ENCODE measurements at regions of chr20 and their contacts with region 1.

Region 1: GRCh38 chr20:5205348-5206210 is 78.8 kb downstream of the CDS2 start:
- DNase-seq: peak; percentile 87
- ATAC-seq: peak; percentile 100
- H3K4me3 Mint-ChIP-seq: no peak overlapping the region
- H3K27ac Mint-ChIP-seq: no peak overlapping the region
- H3K4me1 Mint-ChIP-seq: peaks cover 3% of the 10 kb centered on the region; the same call in 1 of the 2 replicates
- H3K27me3 Mint-ChIP-seq: no peaks in the 10 kb centered on the region
- CTCF ChIP-seq: peak; percentile 80

Region 2: GRCh38 chr20:4937397-4938319 is 267.9 kb before region 1 on chr20:
- CTCF ChIA-PET with region 1: no interaction called
- POLR2A ChIA-PET with region 1: no interaction called
- DNase-seq: no peak
- ATAC-seq: peak; percentile 84
- H3K4me3 Mint-ChIP-seq: no peak overlapping the region
- H3K27ac Mint-ChIP-seq: no peak overlapping the region
- H3K4me1 Mint-ChIP-seq: peaks cover 29% of the 10 kb centered on the region
- H3K27me3 Mint-ChIP-seq: no peaks in the 10 kb centered on the region
- CTCF ChIP-seq: no peak

Region 3: DNA sequence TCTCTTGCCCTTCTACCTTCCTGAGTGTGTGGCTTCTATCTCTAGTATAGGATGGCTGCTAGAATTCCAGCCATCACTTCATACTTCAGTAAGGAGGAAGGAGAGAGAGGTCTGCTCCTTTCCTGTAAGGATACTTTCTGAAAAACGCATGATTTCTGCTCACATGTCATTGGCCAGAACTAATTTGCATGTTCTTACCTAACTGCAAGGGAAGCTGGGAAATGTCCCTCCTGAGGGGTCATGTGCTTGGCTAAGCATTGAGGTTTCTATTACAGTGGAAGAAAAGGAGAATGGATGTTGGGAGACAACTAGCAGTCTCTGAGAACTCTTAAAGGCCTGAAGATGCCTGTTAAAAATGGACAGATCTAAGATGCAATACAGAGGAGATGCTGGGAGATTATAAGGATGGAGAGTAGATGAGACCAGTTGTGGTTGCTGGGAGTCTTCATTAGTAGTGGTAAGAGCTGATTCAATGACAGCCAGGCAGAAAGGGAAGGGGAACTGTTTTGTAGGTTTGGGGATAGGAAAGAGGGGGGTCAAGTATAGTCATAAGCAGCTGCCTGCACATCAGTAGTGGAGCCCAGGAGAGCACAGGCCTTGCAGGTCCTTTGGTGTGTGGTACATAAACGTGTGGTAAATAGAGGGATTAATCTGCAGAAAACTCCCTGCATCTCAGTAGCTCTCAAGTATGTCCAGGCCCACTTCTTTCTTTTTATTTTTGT is 58.5 kb before region 1 on chr20:
- CTCF ChIA-PET with region 1: no interaction called
- POLR2A ChIA-PET with region 1: no interaction called
- DNase-seq: no peak
- ATAC-seq: no peak
- H3K4me3 Mint-ChIP-seq: no peak overlapping the region
- H3K27ac Mint-ChIP-seq: no peak overlapping the region
- H3K4me1 Mint-ChIP-seq: peaks cover 11% of the 10 kb centered on the region
- H3K27me3 Mint-ChIP-seq: no peaks in the 10 kb centered on the region
- CTCF ChIP-seq: no peak

Region 4: DNA sequence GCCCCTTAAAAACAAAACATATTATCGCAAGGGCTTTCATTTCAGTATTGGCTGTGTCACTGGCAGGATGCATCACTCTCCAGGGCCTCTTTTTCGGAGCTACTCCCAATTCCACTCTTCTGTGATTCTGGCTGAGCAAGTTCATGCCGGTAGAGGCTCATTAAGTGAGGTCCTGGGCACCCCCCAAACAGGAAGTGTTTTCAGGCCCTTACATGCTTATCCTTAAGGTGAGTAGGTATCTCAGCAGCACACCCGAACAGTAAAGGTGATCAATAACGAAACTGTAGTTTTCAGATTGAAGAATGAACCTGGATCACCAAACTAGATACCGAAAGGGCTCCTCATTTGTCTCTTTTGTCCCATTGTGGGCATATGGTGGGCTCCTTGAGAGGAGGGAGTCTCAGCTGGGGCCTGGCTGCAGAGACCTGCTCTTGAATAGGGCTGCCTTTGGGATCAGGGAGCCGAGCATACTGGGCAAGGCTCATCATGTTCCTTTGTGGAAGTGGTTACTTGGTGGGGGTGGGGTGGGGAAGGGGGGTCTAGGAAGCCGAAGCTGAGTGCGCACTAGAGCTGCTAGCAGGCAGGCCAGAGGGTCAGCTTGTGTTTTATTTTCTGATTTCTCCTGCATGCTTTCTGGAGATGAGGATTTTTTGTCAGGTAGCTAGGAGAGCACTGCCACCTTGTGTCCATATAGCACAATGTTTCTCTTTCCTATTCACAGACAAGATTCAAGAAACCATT is 13.6 kb before region 1 on chr20:
- CTCF ChIA-PET with region 1: interaction called, 18 read pairs
- POLR2A ChIA-PET with region 1: no interaction called
- DNase-seq: peak; percentile 16
- ATAC-seq: peak; percentile 73
- H3K4me3 Mint-ChIP-seq: no peak overlapping the region
- H3K27ac Mint-ChIP-seq: peak overlapping the region; percentile 71
- H3K4me1 Mint-ChIP-seq: peaks cover 22% of the 10 kb centered on the region
- H3K27me3 Mint-ChIP-seq: no peaks in the 10 kb centered on the region
- CTCF ChIP-seq: peak; percentile 50; the same call in 1 of the 2 replicates

Region 5: DNA sequence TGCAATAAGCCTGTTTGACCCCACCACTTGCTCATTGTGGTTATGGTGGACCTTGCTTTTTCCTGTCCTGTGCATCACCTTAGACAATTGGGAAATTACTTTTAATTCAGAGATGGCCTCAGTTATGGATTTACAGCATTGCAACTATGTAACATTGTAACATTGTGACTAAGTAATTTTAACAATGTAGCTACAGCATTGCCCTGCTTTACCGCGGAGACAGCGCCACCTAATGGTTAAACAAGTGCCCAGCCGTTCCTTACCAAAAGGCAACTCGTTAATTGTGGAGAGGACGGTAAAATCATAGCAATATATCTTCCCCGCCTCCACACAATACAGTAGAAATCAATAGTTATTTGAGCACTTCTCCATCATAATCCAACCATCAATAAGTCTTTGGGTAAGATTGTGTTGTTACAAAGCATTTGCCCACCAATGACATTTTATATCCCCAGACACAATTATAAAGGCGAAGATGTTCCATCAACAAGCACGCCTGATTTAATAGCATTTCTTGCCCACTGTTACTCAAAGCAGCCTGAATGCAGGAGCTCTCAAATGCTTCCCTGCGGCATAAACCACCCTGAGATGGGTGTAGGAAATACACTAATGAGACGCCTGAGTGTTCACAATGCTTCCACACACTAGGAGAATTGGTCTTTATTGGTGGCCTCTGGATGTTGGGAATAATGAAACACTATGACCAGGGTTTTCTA is 17.5 kb after region 1 on chr20:
- CTCF ChIA-PET with region 1: interaction called, 77 read pairs
- POLR2A ChIA-PET with region 1: no interaction called
- DNase-seq: peak; percentile 69
- ATAC-seq: peak; percentile 80
- H3K4me3 Mint-ChIP-seq: no peak overlapping the region
- H3K27ac Mint-ChIP-seq: no peak overlapping the region
- H3K4me1 Mint-ChIP-seq: peaks cover 3% of the 10 kb centered on the region; the same call in 1 of the 2 replicates
- H3K27me3 Mint-ChIP-seq: no peaks in the 10 kb centered on the region; the same call in 1 of the 2 replicates
- CTCF ChIP-seq: peak; percentile 73

Region 6: GRCh38 chr20:5279661-5280060 is 74.1 kb after region 1 on chr20:
- CTCF ChIA-PET with region 1: no interaction called
- POLR2A ChIA-PET with region 1: no interaction called
- DNase-seq: no peak
- ATAC-seq: no peak
- H3K4me3 Mint-ChIP-seq: no peak overlapping the region
- H3K27ac Mint-ChIP-seq: no peak overlapping the region
- H3K4me1 Mint-ChIP-seq: peaks cover 9% of the 10 kb centered on the region
- H3K27me3 Mint-ChIP-seq: peaks cover 4% of the 10 kb centered on the region; the same call in 1 of the 2 replicates
- CTCF ChIP-seq: no peak

Region 7: DNA sequence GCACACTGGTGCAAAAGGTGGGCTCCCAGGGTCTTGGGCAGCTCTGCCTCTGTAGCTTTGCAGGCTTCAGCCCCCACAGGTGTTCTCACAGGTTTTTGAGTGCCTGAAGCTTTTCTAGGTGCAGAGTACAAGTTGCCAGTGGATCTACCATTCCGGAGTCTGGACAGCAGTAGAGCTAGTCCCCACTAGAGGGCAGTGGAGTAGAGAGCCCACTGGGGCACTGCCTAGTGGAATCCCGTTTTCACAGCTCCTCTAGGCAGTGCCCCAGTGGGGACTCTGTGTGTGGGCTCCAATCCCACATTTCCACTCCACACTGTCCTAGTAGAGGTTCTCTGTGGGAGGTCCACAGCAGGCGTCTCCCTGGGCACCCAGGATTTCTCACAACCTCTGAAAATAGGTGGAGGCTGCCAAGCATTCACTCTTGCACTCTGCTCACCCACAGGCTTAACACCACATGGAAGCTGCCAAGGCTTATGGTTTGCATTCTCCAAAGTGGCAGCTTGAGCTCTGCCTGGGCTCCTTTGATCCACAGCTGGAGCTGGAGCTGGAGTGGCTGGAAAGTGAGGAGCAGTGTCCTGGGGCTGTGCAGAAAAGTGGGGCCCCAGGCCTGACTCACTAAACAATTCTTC is 197.4 kb after region 1 on chr20:
- CTCF ChIA-PET with region 1: interaction called, 12 read pairs
- POLR2A ChIA-PET with region 1: no interaction called
- DNase-seq: peak; percentile 67
- ATAC-seq: peak; percentile 93
- H3K4me3 Mint-ChIP-seq: no peak overlapping the region
- H3K27ac Mint-ChIP-seq: no peak overlapping the region
- H3K4me1 Mint-ChIP-seq: no peaks in the 10 kb centered on the region
- H3K27me3 Mint-ChIP-seq: no peaks in the 10 kb centered on the region; the same call in 1 of the 2 replicates
- CTCF ChIP-seq: peak; percentile 62

Region 8: GRCh38 chr20:5448449-5449118 is 243.0 kb after region 1 on chr20:
- CTCF ChIA-PET with region 1: interaction called, 35 read pairs
- POLR2A ChIA-PET with region 1: no interaction called
- DNase-seq: peak; percentile 82
- ATAC-seq: peak; percentile 91
- H3K4me3 Mint-ChIP-seq: no peak overlapping the region
- H3K27ac Mint-ChIP-seq: peak overlapping the region; percentile 35; the same call in 1 of the 2 replicates
- H3K4me1 Mint-ChIP-seq: peaks cover 20% of the 10 kb centered on the region
- H3K27me3 Mint-ChIP-seq: no peaks in the 10 kb centered on the region; the same call in 1 of the 2 replicates
- CTCF ChIP-seq: peak; percentile 68